Activated CD4-positive, alpha-beta T cell treated with anti-CD3 and anti-CD28 coated beads for 36 hours (primary cell): ENCODE measurements at regions of chr15 and their contacts with region 1.

Region 1: DNA sequence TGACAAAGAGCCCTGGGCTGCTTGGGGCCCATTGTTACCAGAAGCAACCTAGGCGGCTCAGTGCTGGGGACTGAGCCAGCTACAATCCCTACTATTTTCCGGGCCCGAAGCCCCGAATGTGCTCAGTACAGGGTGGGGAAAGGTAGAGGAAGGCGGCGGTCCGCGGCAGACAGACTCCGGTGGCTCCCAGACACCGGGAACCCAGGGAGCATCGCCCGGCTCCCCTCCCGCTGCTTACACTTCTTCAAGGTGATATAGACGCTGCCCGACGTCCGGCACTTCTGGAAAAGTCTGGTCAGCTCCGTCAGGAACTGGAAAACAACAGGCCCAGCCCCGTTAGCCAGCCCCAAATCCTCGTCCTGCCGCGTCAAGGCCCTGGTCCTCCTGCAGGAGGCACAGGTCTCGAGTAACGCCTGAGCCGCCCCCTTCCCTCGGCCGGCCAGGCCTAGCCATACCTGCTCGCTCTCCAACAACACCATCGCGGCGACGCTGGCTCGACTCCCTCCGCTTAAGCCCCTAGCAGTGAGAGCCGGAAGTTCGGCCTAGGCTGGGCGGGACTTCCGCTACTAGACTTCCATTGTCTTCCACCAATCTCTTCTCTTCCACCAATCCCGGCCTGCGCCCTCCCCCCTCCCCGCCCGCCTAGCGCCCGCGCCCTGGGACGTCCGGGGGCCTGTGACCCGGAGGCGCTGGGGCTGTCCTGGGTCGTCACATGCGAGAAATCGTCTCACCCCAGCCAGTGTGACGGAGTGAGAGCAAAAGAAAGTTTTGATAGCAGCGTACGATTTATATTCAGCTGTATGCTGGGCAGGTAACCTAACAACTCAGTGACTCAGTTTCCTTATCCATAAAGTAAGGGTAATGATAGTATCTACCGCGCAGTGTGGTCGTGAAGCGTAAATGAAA is at the start of gene SRP14:
- DNase-seq: peak; percentile 95
- ATAC-seq: peak; percentile 96
- H3K4me3 Mint-ChIP-seq: peak within 1 kb of the TSS; percentile 97
- H3K27ac Mint-ChIP-seq: peak within 1 kb of the TSS; percentile 98
- H3K4me1 Mint-ChIP-seq: peaks cover 49% of the 10 kb centered on the region
- H3K27me3 Mint-ChIP-seq: no peaks in the 10 kb centered on the region
- total RNA-seq, gene SRP14: 124 to 157 TPM

Region 2: DNA sequence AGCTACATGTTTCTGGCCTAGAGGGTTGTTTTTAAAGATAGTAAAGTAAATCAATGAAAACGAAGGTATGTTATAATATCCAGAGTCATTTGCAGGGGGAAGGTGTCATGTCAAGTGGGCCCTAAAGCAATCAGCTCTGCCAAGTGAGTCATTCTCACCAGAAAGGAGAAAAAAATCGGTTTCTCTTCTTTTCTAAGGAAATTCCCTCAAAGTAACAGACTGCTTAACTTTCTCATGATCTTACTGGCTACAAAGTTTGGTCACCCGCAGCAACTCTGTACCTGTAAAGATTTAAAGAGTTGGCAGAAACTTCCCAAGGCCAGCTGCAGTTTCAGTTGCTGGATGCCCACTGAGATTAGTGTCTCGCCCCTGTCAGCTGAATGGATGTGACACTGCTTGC is 250.8 kb before region 1 on chr15:
- CTCF ChIA-PET with region 1: no interaction called
- POLR2A ChIA-PET with region 1: no interaction called
- intact Hi-C with region 1: loop called (anchors 1 kb)
- DNase-seq: peak; percentile 46
- ATAC-seq: peak; percentile 84
- H3K4me3 Mint-ChIP-seq: no peak overlapping the region
- H3K27ac Mint-ChIP-seq: no peak overlapping the region
- H3K4me1 Mint-ChIP-seq: peaks cover 48% of the 10 kb centered on the region
- H3K27me3 Mint-ChIP-seq: no peaks in the 10 kb centered on the region

Region 3: DNA sequence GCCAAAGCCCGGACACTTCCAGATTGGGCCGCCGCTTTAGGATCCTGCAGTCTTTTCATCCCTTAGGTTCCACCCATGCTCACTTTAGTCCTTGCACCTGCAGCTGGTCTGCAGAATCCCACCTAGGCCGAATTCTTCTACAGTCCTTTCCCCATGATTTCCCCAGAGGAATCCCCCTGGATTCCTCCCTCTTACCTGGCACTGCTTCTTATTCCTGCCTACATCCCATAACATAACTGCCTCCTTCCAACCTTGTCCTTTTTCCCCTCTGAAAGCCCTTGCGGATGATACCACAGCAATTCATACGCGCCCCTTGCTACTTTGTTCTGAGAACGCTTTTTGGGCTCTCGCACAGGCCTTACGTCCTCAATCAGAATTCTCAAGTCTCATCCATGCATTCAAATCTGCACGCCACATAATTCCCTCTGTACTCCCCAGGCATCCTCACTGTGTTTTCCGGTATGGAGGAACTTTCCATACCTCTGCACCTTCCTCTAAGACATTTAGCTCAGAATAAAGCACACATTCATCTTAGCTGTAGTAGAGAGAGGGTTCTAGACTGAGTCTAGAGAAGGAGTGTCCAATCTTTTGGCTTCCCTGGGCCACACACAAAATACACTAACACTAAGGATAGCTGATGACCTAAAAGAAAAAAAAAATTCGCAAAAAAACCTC is 104.4 kb before region 1 on chr15:
- CTCF ChIA-PET with region 1: interaction called, 3 read pairs
- POLR2A ChIA-PET with region 1: interaction called, 3 read pairs
- intact Hi-C with region 1: loop called in 1 of 2 experiments (anchors 2 kb)
- DNase-seq: peak; percentile 24
- ATAC-seq: no peak
- H3K4me3 Mint-ChIP-seq: peak overlapping the region; percentile 95
- H3K27ac Mint-ChIP-seq: peak overlapping the region; percentile 83
- H3K4me1 Mint-ChIP-seq: peaks cover 41% of the 10 kb centered on the region
- H3K27me3 Mint-ChIP-seq: no peaks in the 10 kb centered on the region

Region 4: DNA sequence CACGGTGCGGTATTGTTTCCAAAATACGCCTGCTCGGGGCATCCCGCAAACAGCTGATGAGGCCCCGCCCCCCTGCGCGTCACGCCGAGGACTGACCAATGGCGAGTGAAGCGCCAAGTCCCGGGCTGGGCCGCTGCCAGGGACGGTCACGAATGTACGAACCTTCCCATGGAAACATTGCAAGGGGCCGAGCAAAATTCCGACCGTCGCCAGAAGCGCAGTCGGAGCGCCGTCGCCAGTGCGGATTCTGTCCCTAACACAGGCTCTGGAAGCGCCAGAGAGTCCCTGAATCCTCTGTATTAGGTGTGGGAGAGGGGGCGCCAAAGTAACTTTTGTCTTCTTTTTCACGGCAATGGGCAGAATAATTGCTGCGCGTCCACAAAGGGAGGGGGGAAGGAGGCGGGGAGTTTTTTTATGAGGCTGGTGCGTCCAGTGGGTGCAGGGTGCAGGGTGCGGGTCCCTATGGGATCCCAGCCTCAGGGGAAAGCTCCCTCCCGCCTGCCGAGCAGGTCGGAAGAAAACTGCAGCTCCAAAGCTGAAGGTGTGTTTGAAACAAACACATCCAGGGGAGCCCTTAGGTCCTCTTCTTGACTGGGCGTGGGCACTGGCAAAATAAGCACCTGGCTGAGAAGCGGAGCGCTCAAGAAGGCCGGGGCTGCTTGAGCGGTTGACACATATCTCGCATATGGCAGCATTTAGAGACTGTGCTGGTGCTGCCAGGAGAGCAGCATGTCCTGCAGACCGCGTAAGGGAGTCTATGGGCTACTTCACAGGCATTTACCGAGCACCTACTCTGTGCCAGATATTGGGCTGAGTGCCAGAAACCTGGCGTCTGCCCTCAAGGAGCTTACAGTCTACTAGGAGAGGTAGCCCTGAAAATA is 70.2 kb after region 1 on chr15 and contains the start of gene BMF:
- CTCF ChIA-PET with region 1: interaction called, 42 read pairs
- POLR2A ChIA-PET with region 1: interaction called, 3 read pairs
- intact Hi-C with region 1: loop called in 1 of 2 experiments (anchors 1 kb)
- DNase-seq: peak; percentile 98
- ATAC-seq: peak; percentile 51
- H3K4me3 Mint-ChIP-seq: peak within 1 kb of the TSS; percentile 78
- H3K27ac Mint-ChIP-seq: peak within 1 kb of the TSS; percentile 76
- H3K4me1 Mint-ChIP-seq: peaks cover 48% of the 10 kb centered on the region
- H3K27me3 Mint-ChIP-seq: peaks cover 2% of the 10 kb centered on the region
- total RNA-seq, gene BMF: 7.6 to 8.4 TPM

Region 5: DNA sequence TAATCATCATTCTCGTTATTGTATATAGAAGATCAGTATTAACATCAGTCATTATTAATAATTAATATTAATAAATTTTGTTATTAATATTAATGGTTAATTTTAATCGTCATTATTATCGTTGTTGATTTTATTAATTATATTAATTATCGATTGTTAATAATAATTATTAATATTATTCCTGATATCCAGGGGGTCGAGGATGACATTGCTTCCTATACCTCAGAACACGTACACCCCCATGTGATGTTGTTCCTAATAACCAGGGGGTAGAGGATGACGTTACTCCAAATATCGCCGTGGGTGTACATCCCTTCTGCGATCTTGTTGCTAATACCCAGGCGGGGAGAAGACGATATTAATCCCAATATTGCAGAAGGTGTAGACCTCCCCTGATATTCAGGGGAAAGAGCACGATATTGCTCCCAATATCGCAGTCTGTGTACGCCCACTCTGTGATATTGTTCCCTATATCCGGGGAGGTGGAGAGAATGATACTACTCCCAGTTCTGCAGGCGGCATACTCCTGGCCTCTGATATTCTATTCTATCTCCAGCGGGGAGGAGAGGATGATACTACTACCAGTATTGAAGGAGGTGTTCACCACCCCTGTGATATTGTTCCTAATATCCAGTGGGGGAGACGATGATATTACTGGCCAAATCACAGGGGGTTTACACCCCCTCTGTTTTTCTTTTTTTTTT is 92.1 kb after region 1 on chr15:
- CTCF ChIA-PET with region 1: no interaction called
- POLR2A ChIA-PET with region 1: no interaction called
- intact Hi-C with region 1: no loop called
- DNase-seq: no peak
- ATAC-seq: peak; percentile 13
- H3K4me3 Mint-ChIP-seq: no peak overlapping the region
- H3K27ac Mint-ChIP-seq: no peak overlapping the region
- H3K4me1 Mint-ChIP-seq: no peaks in the 10 kb centered on the region
- H3K27me3 Mint-ChIP-seq: no peaks in the 10 kb centered on the region

Region 6: DNA sequence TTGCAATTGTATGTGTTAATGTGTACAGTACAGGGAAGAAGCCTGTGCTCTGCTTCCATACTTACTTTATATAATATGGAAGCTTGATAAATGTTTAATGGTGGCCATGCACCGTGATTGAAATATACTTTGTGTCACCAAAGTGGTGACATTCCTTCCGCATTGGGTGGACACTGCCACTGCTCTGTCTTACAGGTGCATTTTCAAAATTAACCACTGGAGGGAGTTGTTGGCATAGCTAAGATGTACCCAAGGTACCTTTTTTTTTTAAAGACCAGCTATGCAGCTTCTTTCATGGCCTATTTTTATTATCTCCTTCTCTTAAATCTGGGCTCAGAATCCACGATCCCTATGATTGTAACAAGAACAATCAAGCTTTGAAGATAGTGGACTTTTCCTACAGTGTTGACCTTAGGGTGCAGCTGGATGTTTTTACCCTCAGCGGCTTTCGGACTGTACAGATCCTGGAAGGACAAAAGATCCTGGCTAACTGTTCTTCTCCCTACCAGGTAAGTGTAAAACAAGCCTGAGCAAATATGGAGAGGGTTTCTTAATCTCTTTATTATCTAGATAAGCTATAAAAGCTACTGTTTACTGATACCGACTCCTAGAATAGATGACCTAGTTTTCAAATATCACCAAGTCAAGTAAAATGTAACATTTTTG is 178.4 kb after region 1 on chr15:
- CTCF ChIA-PET with region 1: interaction called, 10 read pairs
- POLR2A ChIA-PET with region 1: no interaction called
- intact Hi-C with region 1: no loop called
- DNase-seq: peak; percentile 50
- ATAC-seq: peak; percentile 91
- H3K4me3 Mint-ChIP-seq: no peak overlapping the region
- H3K27ac Mint-ChIP-seq: no peak overlapping the region
- H3K4me1 Mint-ChIP-seq: no peaks in the 10 kb centered on the region
- H3K27me3 Mint-ChIP-seq: no peaks in the 10 kb centered on the region

Region 7: GRCh38 chr15:40382580-40383456 is 343.9 kb after region 1 on chr15 and contains the start of gene KNSTRN:
- CTCF ChIA-PET with region 1: no interaction called
- POLR2A ChIA-PET with region 1: no interaction called
- intact Hi-C with region 1: loop called in 1 of 2 experiments (anchors 2 kb)
- DNase-seq: peak; percentile 97
- ATAC-seq: peak; percentile 100
- H3K4me3 Mint-ChIP-seq: peak within 1 kb of the TSS; percentile 93
- H3K27ac Mint-ChIP-seq: peak within 1 kb of the TSS; percentile 78
- H3K4me1 Mint-ChIP-seq: peaks cover 22% of the 10 kb centered on the region
- H3K27me3 Mint-ChIP-seq: no peaks in the 10 kb centered on the region
- total RNA-seq, gene KNSTRN: 56.2 to 58.8 TPM